Endothelial cell of umbilical vein (primary cell): ENCODE measurements at regions of chr10 and their contacts with region 1.

Region 1: GRCh38 chr10:31253237-31253636 is 65.8 kb upstream of the ZEB1 start:
- DNase-seq: no peak
- H3K4me3 ChIP-seq: no peak overlapping the region
- H3K27ac ChIP-seq: no peak overlapping the region
- H3K4me1 ChIP-seq: no peaks in the 10 kb centered on the region
- H3K27me3 ChIP-seq: no peaks in the 10 kb centered on the region
- CTCF ChIP-seq: no peak
- POLR2A ChIP-seq: no peak

Region 2: DNA sequence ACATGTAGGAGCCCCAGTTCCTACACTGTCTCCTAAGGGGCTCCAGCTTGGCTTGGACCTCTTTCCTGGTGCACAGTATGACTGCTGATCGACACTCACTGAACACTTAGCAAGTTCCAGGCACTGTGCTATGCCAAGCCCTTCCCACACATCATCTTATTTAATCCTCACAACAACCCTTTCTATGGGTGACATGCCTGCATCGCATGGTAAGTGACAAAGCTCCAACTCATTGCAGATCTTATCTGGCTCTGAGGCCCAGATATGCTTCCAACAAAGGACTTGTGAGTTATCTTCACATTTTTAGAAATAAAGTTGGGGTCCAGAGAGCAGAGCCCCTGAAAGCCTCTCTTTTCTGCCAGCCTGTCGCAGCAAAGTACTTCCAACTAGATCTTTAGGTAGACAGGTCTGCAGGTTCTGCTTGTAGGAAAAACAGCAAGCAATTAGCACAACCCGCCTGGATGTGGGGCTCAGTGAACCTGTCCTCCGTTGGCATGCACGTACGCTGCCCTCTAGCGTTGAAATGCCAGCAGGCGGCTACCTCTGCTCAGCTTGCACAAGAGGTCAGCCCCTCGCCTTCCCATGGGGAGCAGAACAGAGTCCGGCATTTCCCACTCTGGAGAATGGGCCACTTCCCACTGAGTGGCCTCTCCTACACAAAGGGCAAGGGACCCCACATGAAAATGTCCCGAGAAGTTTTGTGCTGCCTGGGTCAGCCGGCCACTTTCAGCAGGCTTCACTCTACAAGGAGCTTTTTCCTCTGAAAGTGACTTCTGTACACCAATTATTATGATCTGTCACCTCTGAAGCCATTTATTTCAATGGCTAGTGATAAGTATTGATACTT is 1250.9 kb before region 1 on chr10:
- CTCF ChIA-PET with region 1: no interaction called
- POLR2A ChIA-PET with region 1: no interaction called
- dilution Hi-C with region 1: no loop called
- intact Hi-C with region 1: no loop called
- DNase-seq: peak; percentile 85
- H3K4me3 ChIP-seq: no peak overlapping the region
- H3K27ac ChIP-seq: no peak overlapping the region
- H3K4me1 ChIP-seq: peaks cover 11% of the 10 kb centered on the region
- H3K27me3 ChIP-seq: no peaks in the 10 kb centered on the region
- CTCF ChIP-seq: peak; percentile 95 to 97
- POLR2A ChIP-seq: no peak

Region 3: GRCh38 chr10:31219306-31219705 is 33.9 kb before region 1 on chr10:
- CTCF ChIA-PET with region 1: no interaction called
- POLR2A ChIA-PET with region 1: no interaction called
- dilution Hi-C with region 1: no loop called
- intact Hi-C with region 1: loop called (anchors 1 kb)
- DNase-seq: no peak
- H3K4me3 ChIP-seq: no peak overlapping the region
- H3K27ac ChIP-seq: no peak overlapping the region
- H3K4me1 ChIP-seq: no peaks in the 10 kb centered on the region
- H3K27me3 ChIP-seq: no peaks in the 10 kb centered on the region
- CTCF ChIP-seq: no peak
- POLR2A ChIP-seq: no peak

Region 4: DNA sequence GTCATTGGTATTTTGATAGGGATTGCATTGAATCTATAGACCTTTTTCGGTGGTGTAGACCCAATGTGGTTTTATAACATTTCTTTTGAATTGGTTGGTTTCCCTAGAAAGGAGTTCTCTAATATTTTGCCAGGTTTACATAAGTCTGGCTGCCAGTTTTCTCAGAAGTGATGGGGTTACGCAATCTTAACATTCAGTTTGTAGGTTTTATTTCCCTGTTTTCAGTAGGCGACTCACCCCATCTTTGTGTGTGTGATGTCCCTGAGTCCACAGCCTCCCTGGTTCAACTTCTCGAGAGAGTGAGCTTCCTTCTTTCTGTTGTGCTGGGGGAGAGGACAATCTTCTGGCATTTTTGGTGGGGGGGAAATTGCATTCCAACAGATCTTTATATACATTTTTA is 812.6 kb after region 1 on chr10:
- CTCF ChIA-PET with region 1: no interaction called
- POLR2A ChIA-PET with region 1: no interaction called
- dilution Hi-C with region 1: no loop called
- intact Hi-C with region 1: no loop called
- DNase-seq: no peak
- H3K4me3 ChIP-seq: no peak overlapping the region
- H3K27ac ChIP-seq: no peak overlapping the region
- H3K4me1 ChIP-seq: no peaks in the 10 kb centered on the region
- H3K27me3 ChIP-seq: no peaks in the 10 kb centered on the region
- CTCF ChIP-seq: no peak
- POLR2A ChIP-seq: no peak